Activated CD4-positive, alpha-beta T cell treated with anti-CD3 and anti-CD28 coated beads, Interleukin-2, amount 10 ng/mL, durations not matched to agents 24 days and 14 days (primary cell): ENCODE measurements at regions of chr10 and their contacts with region 1.

Region 1: GRCh38 chr10:5446390-5446926 is 34.1 kb downstream of the NET1 start:
- DNase-seq: peak; percentile 94
- H3K4me3 Mint-ChIP-seq: peak overlapping the region; percentile 94
- H3K27ac Mint-ChIP-seq: peak overlapping the region; percentile 89
- H3K4me1 Mint-ChIP-seq: peaks cover 50% of the 10 kb centered on the region
- H3K27me3 Mint-ChIP-seq: no peaks in the 10 kb centered on the region

Region 2: DNA sequence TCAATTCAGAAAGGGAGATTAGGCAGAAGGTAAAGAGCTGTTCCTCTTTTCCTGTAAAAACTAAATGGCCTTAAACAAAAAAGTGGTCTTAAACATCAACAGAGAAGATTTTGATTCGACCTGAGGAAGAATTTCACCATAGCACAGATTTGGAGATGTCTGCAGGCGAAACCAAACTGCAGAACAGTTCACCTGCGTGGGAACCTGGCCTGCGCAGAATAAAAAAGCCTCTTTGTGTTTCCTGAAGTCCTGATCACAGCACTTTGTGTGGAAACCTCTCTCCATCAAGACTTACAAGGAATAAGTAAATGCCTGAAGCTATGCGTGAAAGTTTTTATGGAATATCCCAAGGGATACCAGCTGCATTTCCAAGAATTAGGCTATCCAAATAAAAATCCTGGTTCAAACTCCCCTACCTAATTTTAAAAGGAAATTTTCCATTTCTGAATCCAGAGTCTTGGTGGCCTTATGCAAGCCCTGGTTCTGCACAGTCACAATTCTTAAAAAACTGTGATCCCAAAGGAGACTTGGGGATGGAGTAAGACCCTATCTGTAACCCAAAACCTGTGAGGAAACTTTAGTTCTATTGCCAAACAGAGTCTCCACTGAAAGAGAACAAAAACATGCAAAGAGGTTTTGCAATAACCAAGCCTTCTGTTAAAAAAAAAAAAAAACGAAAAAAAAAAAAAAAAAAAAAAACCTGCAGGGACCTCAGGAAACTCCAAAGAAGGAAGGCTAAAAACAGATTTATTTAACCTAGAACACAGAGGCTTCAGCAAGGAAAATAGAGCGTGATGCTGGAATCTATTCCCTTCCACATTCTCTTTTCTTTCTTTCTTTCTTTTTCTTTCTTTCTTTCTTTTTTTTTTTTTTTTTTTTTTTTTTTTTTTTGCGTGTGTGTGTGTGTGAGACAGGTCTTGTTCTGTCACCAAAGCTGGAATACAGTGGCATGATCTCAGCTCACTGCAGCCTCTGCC is 88.7 kb after region 1 on chr10:
- intact Hi-C with region 1: no loop called
- DNase-seq: no peak
- H3K4me3 Mint-ChIP-seq: no peak overlapping the region
- H3K27ac Mint-ChIP-seq: no peak overlapping the region
- H3K4me1 Mint-ChIP-seq: no peaks in the 10 kb centered on the region
- H3K27me3 Mint-ChIP-seq: peaks cover 1% of the 10 kb centered on the region

Region 3: GRCh38 chr10:5548527-5549223 is 102.2 kb after region 1 on chr10:
- intact Hi-C with region 1: loop called (anchors 1 kb)
- DNase-seq: peak; percentile 87
- H3K4me3 Mint-ChIP-seq: no peak overlapping the region
- H3K27ac Mint-ChIP-seq: no peak overlapping the region
- H3K4me1 Mint-ChIP-seq: peaks cover 24% of the 10 kb centered on the region
- H3K27me3 Mint-ChIP-seq: peaks cover 9% of the 10 kb centered on the region

Region 4: DNA sequence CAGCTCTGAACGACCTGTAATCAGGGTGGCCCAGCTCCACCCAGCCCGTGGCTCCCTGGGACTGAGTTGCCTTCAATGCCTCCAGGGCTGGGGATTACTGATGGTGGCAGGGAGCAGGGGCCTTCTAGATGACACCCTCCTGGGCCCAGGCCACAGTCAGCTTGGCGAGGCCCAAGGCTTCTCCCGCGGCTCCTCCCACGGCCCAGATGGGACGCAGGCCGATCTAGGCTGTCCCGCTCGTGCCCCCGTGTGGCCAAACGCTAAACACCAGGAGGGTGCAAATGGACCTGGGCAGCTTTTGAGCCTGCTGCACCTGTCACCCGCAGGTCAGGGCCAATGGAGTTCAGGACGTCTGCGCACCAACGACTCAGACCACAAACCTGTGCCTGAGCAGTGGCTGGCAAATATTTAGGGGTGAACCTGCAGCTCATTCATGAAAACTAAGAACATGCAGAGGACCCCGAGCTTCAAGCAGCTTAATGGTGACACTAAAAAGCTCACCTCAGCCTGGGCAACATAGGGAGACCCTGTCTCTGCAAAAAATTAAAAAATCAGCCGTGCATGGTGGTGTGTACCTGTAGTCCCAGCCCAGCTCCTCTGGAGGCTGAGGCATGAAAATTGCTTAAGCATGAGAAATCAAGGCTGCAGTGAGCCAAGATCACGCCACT is 176.8 kb after region 1 on chr10:
- intact Hi-C with region 1: loop called (anchors 1 kb)
- DNase-seq: peak; percentile 95
- H3K4me3 Mint-ChIP-seq: no peak overlapping the region
- H3K27ac Mint-ChIP-seq: no peak overlapping the region
- H3K4me1 Mint-ChIP-seq: peaks cover 5% of the 10 kb centered on the region
- H3K27me3 Mint-ChIP-seq: no peaks in the 10 kb centered on the region

Region 5: DNA sequence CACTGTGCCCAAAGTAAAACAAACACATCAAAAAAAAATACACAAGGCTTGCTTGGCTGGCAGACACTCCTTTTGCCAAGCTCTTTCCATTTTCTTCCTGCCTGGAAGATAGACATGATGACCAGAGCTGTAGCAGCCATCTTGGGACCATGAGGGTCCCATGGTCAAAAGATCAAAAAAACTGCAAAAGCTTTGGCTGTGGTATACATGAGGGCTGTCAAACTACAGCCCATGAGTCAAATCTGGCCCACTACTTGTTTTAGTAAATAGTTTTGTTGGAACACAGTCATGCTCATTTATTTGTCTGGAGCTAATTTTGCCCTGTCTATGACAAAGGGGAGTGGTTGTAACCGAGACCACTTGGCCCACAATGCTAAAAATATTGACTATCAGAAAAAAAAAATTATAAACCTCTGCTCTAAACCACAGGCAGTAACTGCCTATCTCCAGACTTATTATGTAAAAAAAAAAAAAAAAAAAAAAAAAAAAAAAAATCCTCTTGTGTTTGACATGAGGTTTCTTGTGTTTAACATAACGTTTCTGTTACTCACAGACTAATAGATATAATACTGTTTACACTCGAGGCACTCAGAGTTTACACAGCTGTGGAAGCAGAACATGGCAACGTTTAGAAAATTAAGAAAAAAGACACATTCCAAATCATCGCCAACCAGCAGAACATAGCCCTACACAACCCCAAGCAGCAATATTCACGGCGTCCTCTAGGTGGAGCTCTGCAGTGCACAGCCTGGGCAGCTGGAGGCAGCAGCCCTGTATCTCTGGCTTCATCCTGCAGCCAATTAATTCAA is 183.0 kb after region 1 on chr10:
- intact Hi-C with region 1: loop called (anchors 2 kb)
- DNase-seq: peak; percentile 96
- H3K4me3 Mint-ChIP-seq: peak overlapping the region; percentile 50
- H3K27ac Mint-ChIP-seq: peak overlapping the region; percentile 87
- H3K4me1 Mint-ChIP-seq: peaks cover 20% of the 10 kb centered on the region
- H3K27me3 Mint-ChIP-seq: peaks cover 4% of the 10 kb centered on the region

Region 6: GRCh38 chr10:5840314-5841307 is 394.2 kb after region 1 on chr10:
- intact Hi-C with region 1: no loop called
- DNase-seq: no peak
- H3K4me3 Mint-ChIP-seq: no peak overlapping the region
- H3K27ac Mint-ChIP-seq: no peak overlapping the region
- H3K4me1 Mint-ChIP-seq: peaks cover 11% of the 10 kb centered on the region
- H3K27me3 Mint-ChIP-seq: no peaks in the 10 kb centered on the region

Region 7: DNA sequence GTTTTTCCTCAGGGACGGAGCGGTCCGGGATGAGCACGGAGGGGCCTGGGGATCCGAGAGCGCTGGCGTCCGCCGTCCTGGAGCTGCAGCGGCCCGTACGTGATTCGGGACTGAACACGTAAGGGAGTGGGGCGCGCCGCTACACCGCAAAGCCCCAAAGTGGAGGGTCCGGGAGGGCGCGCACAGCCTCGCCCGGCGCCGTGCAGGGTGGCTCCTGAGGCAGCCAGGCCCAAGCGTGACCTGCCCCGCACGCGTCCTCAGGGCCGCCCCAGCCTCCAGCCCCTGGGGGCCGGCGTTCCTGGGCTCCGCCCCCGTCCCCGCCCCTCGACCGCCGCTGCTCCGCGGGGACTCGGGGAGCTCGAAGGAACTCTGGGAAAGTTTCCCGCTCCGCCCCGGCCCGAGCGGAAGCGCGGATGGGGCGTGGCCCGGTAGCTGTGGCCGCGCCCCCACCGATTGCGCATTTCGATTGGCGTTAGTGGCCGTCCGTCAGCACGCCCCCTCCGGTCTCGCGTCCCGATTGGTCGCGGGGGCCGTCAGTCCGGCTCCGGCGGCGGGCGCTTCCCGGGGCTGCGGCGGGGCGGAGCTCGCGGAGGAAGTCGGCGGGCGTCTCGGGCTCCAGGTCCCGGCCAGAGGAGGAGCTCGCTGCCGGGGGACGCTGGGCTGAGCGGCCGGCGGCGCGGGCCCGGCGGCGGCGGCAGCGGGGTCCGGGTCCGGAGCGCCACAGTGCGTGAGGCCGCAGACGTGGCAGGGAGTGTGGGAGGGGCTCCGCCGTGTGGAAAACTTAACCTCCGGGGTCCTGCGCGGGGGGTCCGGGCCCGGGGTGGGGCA is 443.4 kb after region 1 on chr10 and contains the starts of genes ANKRD16 and FBH1:
- intact Hi-C with region 1: loop called (anchors 10 kb)
- DNase-seq: peak; percentile 100
- H3K4me3 Mint-ChIP-seq: peak within 1 kb of the TSS; percentile 94
- H3K27ac Mint-ChIP-seq: peak within 1 kb of the TSS; percentile 85
- H3K4me1 Mint-ChIP-seq: peaks cover 40% of the 10 kb centered on the region
- H3K27me3 Mint-ChIP-seq: no peaks in the 10 kb centered on the region
- total RNA-seq, gene ANKRD16: 10.8 and 12.2 TPM in 2 replicates
- total RNA-seq, gene FBH1: 58.4 and 62.9 TPM in 2 replicates